ENCODE measurements at regions of chr17 and their contacts with region 1.

Region 1: GRCh38 chr17:73103641-73104335 is 11.3 kb upstream of the SLC39A11 start:
- DNase-seq: peak; percentile 83 to 94 (median 91)
- H3K4me3 ChIP-seq: peak overlapping the region in 1 of 3 experiments; percentile 40
- H3K4me3 Mint-ChIP-seq: peak overlapping the region; percentile 31 to 62
- H3K27ac ChIP-seq: peak overlapping the region; percentile 85
- H3K27ac Mint-ChIP-seq: peak overlapping the region; percentile 91 to 97 (median 96)
- H3K4me1 ChIP-seq: peaks cover 46 to 60% of the 10 kb centered on the region in 2 donors
- H3K4me1 Mint-ChIP-seq: peaks cover 54% of the 10 kb centered on the region
- H3K27me3 ChIP-seq: no peaks in the 10 kb centered on the region
- H3K27me3 Mint-ChIP-seq: peaks cover 1 to 3% (median 2%) of the 10 kb centered on the region in 3 donors
- CTCF ChIP-seq: no peak

Region 2: DNA sequence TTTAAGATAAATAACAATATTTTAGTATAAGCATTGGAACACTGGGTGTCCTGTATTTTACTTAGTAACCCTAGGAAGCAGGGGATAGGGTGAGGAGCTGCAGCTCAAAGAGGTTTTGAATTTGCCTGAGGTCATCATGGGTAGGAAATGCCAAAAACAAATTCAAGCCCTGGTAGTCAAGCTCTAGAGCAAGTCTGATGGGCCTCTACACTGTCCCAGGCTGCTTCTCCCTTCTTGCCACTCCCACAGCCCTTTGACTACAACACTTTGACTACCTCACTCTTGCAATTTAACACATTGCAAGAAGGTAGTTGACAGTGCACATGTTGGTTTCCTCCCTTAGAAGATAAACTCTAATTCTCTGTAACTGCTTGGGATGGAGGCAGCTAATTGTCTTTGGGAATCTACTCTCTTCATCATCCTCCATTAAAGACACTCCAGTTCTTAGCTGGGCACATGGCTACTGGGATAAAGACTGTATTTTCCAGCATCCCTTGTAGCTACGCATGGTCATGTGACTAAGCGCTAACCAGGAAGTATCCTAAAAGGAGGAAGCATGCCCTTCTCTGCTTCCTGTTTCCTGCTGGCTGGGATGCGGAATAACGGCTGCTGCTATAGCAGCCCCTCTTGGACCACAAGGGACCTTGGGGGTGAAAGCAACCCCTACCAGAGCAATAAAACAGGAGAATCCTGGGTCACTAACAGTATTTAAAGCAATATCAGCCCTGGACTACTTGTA is 30.3 kb after region 1 on chr17:
- intact Hi-C with region 1: loop called in 1 of 2 experiments (anchors 2 kb)
- DNase-seq: peak; percentile 51 to 90 (median 85)
- H3K4me3 ChIP-seq: peak overlapping the region in 1 of 3 experiments; percentile 65
- H3K4me3 Mint-ChIP-seq: peak overlapping the region in 1 of 2 donors; percentile 60
- H3K27ac ChIP-seq: peak overlapping the region in 1 of 2 donors; percentile 65
- H3K27ac Mint-ChIP-seq: peak overlapping the region in 6 of 7 donors; percentile 50 to 68 (median 66)
- H3K4me1 ChIP-seq: peaks cover 42 to 44% of the 10 kb centered on the region in 2 donors
- H3K4me1 Mint-ChIP-seq: peaks cover 39% of the 10 kb centered on the region
- H3K27me3 ChIP-seq: no peaks in the 10 kb centered on the region
- H3K27me3 Mint-ChIP-seq: peaks cover 0 to 2% (median 2%) of the 10 kb centered on the region in 3 donors
- CTCF ChIP-seq: no peak

Measured in CD14-positive monocyte (primary cell).